Keratinocyte (primary cell): ENCODE measurements at regions of chr17 and their contacts with region 1.

Region 1: DNA sequence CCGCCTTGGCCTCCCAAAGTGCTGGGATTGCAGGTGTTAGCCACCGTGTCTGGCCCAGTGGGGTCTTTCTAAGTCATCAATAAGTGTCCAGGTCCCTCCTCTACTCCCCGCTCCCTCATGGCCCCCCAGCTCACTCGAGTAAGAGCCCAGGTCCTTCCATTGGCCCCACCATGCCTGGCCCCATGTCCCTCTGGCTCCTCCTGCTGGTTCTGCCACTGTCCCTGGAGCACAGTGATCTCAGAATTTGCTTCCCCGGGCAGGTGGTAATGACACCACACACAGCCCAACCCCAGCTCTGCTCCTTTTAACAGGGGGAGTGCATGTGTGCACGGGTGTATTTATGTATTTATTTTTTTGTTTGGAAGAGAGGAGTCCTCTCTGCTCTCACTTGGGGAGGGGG is 19.6 kb downstream of the MGAT5B start:
- DNase-seq: no peak
- H3K4me3 ChIP-seq: no peak overlapping the region
- H3K27ac ChIP-seq: no peak overlapping the region
- H3K4me1 ChIP-seq: no peaks in the 10 kb centered on the region
- H3K27me3 ChIP-seq: peaks cover 18% of the 10 kb centered on the region
- CTCF ChIP-seq: peak; percentile 9 to 39 (median 23)

Region 2: GRCh38 chr17:76997981-76998531 is 110.3 kb after region 1 on chr17:
- dilution Hi-C with region 1: loop called (anchors 25 kb)
- DNase-seq: no peak
- H3K4me3 ChIP-seq: no peak overlapping the region
- H3K27ac ChIP-seq: no peak overlapping the region
- H3K4me1 ChIP-seq: no peaks in the 10 kb centered on the region
- H3K27me3 ChIP-seq: peaks cover 13% of the 10 kb centered on the region
- CTCF ChIP-seq: no peak